Activated CD4-positive, alpha-beta memory T cell treated with anti-CD3 and anti-CD28 coated beads for 36 hours (primary cell): ENCODE measurements at regions of chr19 and their contacts with region 1.

Region 1: GRCh38 chr19:45079063-45079910 is at the start of gene GEMIN7:
- DNase-seq: peak; percentile 88
- H3K4me3 Mint-ChIP-seq: peak within 1 kb of the TSS; percentile 96
- H3K27ac Mint-ChIP-seq: peak within 1 kb of the TSS; percentile 76
- H3K4me1 Mint-ChIP-seq: peaks cover 42% of the 10 kb centered on the region
- H3K27me3 Mint-ChIP-seq: no peaks in the 10 kb centered on the region
- total RNA-seq, gene GEMIN7: 29.8 to 30.1 TPM

Region 2: GRCh38 chr19:45016388-45017319 is 62.6 kb before region 1 on chr19:
- CTCF ChIA-PET with region 1: no interaction called
- POLR2A ChIA-PET with region 1: no interaction called
- intact Hi-C with region 1: loop called (anchors 1 kb)
- DNase-seq: peak; percentile 91
- H3K4me3 Mint-ChIP-seq: peak overlapping the region; percentile 34
- H3K27ac Mint-ChIP-seq: peak overlapping the region; percentile 90
- H3K4me1 Mint-ChIP-seq: peaks cover 17% of the 10 kb centered on the region
- H3K27me3 Mint-ChIP-seq: no peaks in the 10 kb centered on the region

Region 3: GRCh38 chr19:45092747-45093678 is 13.7 kb after region 1 on chr19 and contains the start of gene PPP1R37:
- CTCF ChIA-PET with region 1: interaction called, 3 read pairs
- POLR2A ChIA-PET with region 1: interaction called, 22 read pairs
- intact Hi-C with region 1: loop called (anchors 1 kb)
- DNase-seq: peak; percentile 95
- H3K4me3 Mint-ChIP-seq: peak within 1 kb of the TSS; percentile 86
- H3K27ac Mint-ChIP-seq: peak within 1 kb of the TSS; percentile 97
- H3K4me1 Mint-ChIP-seq: peaks cover 46% of the 10 kb centered on the region
- H3K27me3 Mint-ChIP-seq: no peaks in the 10 kb centered on the region
- total RNA-seq, gene PPP1R37: 12.7 to 13.1 TPM

Region 4: GRCh38 chr19:45250832-45251451 is 171.7 kb after region 1 on chr19 and contains the start of gene MARK4:
- CTCF ChIA-PET with region 1: no interaction called
- POLR2A ChIA-PET with region 1: no interaction called
- intact Hi-C with region 1: loop called (anchors 1 kb)
- DNase-seq: peak; percentile 66
- H3K4me3 Mint-ChIP-seq: peak within 1 kb of the TSS; percentile 74
- H3K27ac Mint-ChIP-seq: no peak within 1 kb of the TSS
- H3K4me1 Mint-ChIP-seq: peaks cover 28% of the 10 kb centered on the region
- H3K27me3 Mint-ChIP-seq: peaks cover 3% of the 10 kb centered on the region
- total RNA-seq, gene MARK4: 20.3 to 21.6 TPM